Cardiac septum (tissue), 1 donor: ENCODE measurements at regions of chr21 and their contacts with region 1.

Region 1: DNA sequence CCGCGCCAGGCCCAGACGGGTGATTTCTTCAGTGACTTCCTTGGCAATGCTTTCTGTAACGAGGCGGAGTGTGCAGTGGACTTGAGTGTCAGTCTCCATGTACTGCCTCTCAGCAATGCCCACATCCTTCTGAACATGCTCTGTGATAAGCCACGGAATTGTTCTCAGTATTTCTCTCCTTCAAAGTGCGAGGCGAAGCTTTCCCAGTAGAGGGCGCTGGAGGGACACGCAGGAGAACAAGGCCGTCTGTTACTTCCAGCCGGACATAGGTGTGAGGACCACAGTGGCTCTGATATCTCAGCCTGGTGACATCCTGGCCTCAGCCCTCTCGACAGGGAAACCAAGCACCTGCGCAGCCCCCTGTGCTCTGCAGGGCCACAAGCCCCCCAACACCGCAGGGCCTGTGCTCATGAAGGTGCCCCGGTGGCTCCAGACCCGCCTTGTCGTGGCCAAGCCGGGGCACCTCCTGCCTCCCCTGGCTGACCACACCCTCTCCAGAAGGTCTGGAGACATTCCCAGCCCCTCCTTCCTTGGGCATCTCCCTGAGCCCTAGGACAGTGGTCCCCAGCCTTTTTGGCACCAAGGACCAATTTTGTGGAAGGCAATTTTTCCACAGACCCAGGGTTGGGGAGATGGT is 46.1 kb upstream of the BACE2 start:
- DNase-seq: no peak

Region 2: DNA sequence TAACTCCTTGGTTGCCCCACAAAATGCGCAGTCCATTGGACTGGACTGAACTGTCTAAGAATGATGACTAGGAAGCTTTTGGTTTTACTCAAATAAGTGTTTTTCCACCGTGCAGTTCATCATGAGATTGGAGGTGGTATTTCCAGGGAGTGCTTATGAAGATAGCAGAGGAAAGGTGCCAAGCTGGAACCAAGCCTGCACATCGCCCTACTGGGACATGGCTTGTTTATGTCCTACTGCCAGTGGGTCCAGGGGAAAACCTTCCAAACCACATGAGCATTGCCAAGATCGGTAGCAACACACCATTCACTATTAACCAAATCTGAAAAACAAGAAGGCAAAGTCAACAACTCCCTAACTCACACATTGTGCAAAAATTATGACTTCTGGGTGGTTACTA is 220.2 kb before region 1 on chr21:
- intact Hi-C with region 1: no loop called
- DNase-seq: no peak

Region 3: DNA sequence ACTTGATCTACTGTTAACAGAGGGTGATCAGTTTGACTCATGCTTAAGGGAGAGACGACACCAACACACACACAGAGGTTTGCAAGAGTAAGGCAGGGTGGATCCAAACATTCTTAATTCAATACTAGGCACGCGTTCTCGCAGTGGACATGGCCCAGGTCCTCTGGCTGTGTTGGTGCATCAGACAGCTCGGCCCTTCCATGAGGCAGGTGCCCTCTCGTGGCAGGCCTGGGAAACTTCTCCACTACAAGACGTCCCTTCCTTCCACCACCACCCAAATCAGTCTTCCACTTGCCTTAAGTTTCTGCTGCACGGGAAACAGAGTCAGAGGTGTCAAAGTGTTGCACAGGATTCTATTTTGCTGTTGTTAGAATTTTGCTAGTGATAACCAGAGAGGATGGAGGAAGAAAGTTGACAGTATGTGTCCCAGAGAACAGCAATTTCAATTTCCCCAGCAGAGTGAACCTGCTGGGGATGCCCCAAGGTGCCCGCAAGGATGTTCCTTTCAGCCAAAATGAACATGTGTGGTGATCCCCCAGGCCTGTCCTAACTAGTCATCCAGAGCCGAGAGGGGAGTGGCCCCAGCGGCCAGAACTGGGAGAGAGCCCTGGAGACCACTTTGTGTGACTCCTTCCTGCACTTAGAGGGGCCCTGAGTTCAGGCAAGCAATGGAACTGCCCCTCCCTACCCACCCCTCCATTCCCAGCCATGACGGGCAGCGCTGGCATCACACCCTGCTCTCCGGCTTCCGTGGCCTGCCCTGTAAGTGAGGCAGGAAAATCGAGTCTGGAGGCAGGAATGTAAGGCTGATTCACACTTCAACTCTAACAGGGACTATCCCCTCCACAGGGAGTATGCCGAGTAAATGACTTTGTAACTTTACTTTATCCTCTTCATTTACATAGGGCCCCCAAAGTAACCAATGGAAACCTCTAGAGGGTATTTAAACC is 338.9 kb after region 1 on chr21:
- intact Hi-C with region 1: loop called (anchors 2 kb)
- DNase-seq: peak; percentile 82